ENCODE measurements at regions of chr15 and their contacts with region 1.

Region 1: DNA sequence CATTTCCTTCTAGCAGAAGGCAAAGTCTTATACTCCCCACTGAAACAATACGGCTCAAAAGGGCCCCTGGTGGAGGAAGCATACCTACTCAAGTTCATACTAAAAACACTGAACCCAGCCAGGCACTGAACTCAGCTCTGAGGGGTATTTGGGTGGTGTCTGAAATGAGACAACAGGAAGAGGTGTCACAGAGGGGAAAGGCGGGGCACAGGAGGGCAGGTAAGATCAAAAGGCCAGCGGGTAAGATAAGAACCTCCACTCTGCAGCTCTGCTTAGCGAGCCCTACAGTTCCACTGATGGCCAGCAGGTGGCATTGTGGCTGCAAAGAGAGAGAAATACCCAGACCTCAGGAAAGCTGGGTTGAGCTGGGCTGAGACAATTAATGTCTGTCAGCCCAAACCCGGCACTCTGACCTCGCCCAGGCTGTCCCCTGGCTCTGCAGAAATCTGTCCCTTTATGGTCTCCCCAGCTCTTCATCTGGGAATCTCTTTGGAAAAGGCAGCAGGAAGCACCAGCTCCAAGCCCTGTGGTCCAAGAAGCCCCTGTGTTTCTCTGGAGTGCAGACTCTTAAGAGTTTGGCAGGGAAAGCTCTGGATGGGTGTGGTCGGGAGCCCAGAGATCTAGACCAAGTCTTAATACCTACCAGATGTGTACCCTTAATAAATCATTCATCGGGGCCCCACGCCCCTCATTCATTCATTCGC is 8.4 kb downstream of the MFGE8 start:
- DNase-seq: peak; percentile 76 to 92 (median 83)
- H3K4me3 ChIP-seq: no peak overlapping the region
- H3K27ac ChIP-seq: peak overlapping the region in 1 of 5 donors; percentile 22
- H3K4me1 ChIP-seq: peaks cover 0 to 5% of the 10 kb centered on the region in 2 donors
- H3K27me3 ChIP-seq: no peaks in the 10 kb centered on the region
- CTCF ChIP-seq: peak; percentile 94 to 99 (median 96)
- POLR2A ChIP-seq: no peak

Region 2: DNA sequence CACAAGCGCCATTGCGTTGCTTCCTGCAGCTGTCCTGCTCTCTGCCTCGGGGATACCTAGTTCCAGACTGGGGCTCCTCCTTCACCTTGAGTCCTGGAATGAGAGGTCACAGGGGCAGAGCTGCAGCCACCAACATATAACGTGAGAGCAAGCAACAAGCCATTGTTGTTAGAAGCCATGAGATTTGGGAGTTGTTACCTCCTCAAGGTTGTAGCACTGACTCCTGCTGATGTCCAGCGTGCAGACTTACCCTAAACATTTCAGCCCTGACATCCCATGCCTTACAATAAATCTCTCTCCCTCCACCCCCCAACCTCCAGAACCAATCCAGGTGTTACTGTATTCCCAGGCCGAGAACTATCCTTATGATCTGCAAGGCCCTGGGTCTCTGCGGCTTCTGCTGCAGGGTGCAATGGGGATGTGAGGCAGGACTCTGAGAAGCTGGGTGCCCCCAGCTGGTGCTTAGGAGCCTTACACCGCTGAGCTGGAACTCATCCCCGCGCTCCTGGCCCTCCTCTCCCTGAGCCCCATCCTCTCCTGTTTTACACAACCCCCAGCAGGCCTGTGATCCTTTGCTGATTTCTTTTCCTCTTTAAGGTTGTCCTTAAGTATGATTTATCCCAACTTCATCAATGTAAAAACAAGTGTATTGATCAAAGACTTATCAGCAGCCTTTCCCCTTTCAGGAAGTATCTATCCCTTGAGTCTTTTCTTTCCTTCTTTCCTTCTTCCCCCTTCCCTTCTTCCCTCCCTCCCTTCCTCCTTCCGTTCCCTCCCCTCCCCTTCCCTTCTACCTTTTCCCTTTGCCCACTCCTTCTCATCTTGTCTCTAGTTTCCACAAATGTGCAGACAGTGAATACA is 99.3 kb after region 1 on chr15:
- intact Hi-C with region 1: loop called in 1 of 2 experiments (anchors 5 kb)
- DNase-seq: peak in 3 of 7 donors; percentile 12 to 25 (median 16)
- H3K4me3 ChIP-seq: no peak overlapping the region
- H3K27ac ChIP-seq: no peak overlapping the region
- H3K4me1 ChIP-seq: peaks cover 0 to 6% of the 10 kb centered on the region in 2 donors
- H3K27me3 ChIP-seq: no peaks in the 10 kb centered on the region
- CTCF ChIP-seq: peak in 3 of 6 experiments; percentile 23 to 37 (median 29)
- POLR2A ChIP-seq: no peak

Region 3: DNA sequence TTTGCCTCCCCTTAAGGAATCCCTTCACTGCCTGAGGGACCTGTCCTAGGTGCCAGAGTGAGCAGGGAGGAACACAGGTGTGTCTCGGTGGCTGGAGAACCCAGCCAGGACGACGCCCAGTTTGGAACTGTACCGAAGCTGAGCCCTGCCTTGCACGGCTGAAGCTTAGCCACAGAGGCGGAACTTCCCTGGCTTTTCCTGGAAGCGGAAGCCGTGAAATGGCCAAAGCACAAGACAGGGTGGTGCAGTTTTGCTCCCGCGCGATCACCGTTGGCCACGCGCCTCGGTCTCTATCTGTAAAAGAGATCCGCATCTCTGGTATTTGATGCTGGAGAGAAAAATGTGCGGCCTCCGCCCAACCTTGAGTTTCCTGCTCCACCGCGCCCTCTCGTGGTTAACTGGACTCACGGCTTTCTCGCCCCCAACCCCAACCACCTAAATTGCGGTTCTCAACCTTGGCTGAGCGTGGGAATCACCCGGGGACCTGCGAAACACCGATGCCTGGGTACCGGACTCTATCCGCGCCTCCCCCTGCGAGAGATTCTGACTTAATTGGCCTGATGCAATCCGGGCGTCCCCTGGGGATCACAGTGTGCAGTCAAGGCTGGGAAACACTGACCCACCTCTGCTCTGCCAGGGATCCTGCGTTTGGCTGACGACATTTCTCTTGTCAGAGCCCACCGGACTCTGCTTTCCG is 112.7 kb after region 1 on chr15:
- intact Hi-C with region 1: loop called (anchors 2 to 5 kb)
- DNase-seq: peak; percentile 70 to 90 (median 82)
- H3K4me3 ChIP-seq: peak overlapping the region in 1 of 4 donors; percentile 1
- H3K27ac ChIP-seq: peak overlapping the region in 3 of 5 donors; percentile 20 to 80 (median 58)
- H3K4me1 ChIP-seq: peaks cover 10 to 17% of the 10 kb centered on the region in 2 donors
- H3K27me3 ChIP-seq: no peaks in the 10 kb centered on the region
- CTCF ChIP-seq: peak; percentile 66 to 83 (median 76)
- POLR2A ChIP-seq: no peak

Measured in adrenal gland (tissue), 19 donors.